ENCODE measurements at regions of chr20 and their contacts with region 1.

Region 1: GRCh38 chr20:35619196-35620095 is 3.8 kb downstream of the SPAG4 start:
- DNase-seq: peak; percentile 96
- H3K4me3 ChIP-seq: peak overlapping the region; percentile 60 to 68 (median 62)
- H3K27ac ChIP-seq: peak overlapping the region; percentile 44 to 98 (median 92)
- H3K4me1 ChIP-seq: peaks cover 28 to 45% (median 42%) of the 10 kb centered on the region in 4 donors
- H3K27me3 ChIP-seq: no peaks in the 10 kb centered on the region
- CTCF ChIP-seq: peak in 1 of 3 experiments; percentile 11
- EP300 ChIP-seq: no peak
- POLR2A ChIP-seq: no peak

Region 2: GRCh38 chr20:35664544-35665221 is 45.2 kb after region 1 on chr20 and contains the starts of genes CPNE1 and RBM12:
- intact Hi-C with region 1: loop called (anchors 5 kb)
- DNase-seq: peak; percentile 98
- H3K4me3 ChIP-seq: peak within 1 kb of the TSS; percentile 71 to 88 (median 78)
- H3K27ac ChIP-seq: peak within 1 kb of the TSS; percentile 94 to 99 (median 97)
- H3K4me1 ChIP-seq: peaks cover 34 to 49% (median 41%) of the 10 kb centered on the region in 4 donors
- H3K27me3 ChIP-seq: no peaks in the 10 kb centered on the region
- CTCF ChIP-seq: peak in 1 of 3 experiments; percentile 20
- EP300 ChIP-seq: no peak
- POLR2A ChIP-seq: peak; percentile 72
- total RNA-seq, gene CPNE1: 23.0 to 148 (median 99.9) TPM
- total RNA-seq, gene RBM12: 21.0 to 30.6 (median 24.0) TPM